AG04449 (cell line): ENCODE measurements at regions of chr20 and their contacts with region 1.

Region 1: GRCh38 chr20:51014797-51015722 is 7.8 kb downstream of the KCNG1 start:
- DNase-seq: no peak
- H3K4me3 ChIP-seq: no peak overlapping the region
- CTCF ChIP-seq: peak; percentile 88

Region 2: DNA sequence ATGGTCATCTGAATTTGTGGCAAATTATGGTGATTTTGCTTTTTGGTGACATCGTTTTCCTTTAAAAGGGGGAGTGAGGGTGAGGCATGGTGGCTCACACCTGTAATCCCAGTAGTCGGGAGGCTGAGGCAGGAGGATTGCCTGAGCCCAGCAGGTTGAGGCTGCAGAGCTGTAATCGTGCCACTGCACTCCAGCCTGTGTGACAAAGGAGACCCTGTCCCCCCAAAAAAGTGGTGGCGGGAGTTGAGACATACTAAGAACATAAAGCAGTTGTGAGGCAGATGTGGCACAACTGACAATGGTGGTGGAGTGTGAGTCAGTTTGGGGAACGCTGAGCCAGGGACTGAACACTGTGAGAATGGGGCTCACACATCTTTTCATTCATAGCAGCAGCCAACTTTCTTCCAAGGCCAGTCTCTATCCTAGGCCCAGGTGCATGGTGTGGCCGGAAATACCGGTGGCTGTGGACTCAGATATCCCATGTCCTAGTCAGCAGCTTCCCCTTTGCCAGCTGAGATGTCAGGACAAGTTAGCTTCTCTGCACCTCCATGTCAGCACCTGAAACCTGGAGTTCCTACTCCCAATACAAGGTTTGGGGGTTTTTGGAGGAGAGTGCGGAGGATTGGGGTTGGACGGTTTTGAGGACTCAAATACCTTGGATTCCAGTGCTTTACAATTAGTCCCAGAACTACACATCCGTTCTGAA is 129.1 kb before region 1 on chr20:
- CTCF ChIA-PET with region 1: no interaction called
- POLR2A ChIA-PET with region 1: no interaction called
- DNase-seq: no peak
- H3K4me3 ChIP-seq: no peak overlapping the region
- CTCF ChIP-seq: no peak

Region 3: GRCh38 chr20:50987592-50988210 is 27.4 kb before region 1 on chr20:
- CTCF ChIA-PET with region 1: interaction called, 18 read pairs
- POLR2A ChIA-PET with region 1: no interaction called
- DNase-seq: peak; percentile 60
- H3K4me3 ChIP-seq: no peak overlapping the region
- CTCF ChIP-seq: peak; percentile 79

Region 4: GRCh38 chr20:51029963-51030920 is 15.2 kb after region 1 on chr20:
- CTCF ChIA-PET with region 1: interaction called, 37 read pairs
- POLR2A ChIA-PET with region 1: no interaction called
- DNase-seq: no peak
- H3K4me3 ChIP-seq: no peak overlapping the region
- CTCF ChIP-seq: no peak

Region 5: GRCh38 chr20:51128198-51128597 is 113.1 kb after region 1 on chr20:
- CTCF ChIA-PET with region 1: interaction called, 10 read pairs
- POLR2A ChIA-PET with region 1: no interaction called
- DNase-seq: peak; percentile 70
- H3K4me3 ChIP-seq: no peak overlapping the region
- CTCF ChIP-seq: no peak

Region 6: GRCh38 chr20:51318058-51318895 is 303.2 kb after region 1 on chr20:
- CTCF ChIA-PET with region 1: interaction called, 14 read pairs
- POLR2A ChIA-PET with region 1: no interaction called
- DNase-seq: no peak
- H3K4me3 ChIP-seq: no peak overlapping the region
- CTCF ChIP-seq: peak; percentile 56